Heart right ventricle (tissue), 16 donors: ENCODE measurements at regions of chr6 and their contacts with region 1.

Region 1: DNA sequence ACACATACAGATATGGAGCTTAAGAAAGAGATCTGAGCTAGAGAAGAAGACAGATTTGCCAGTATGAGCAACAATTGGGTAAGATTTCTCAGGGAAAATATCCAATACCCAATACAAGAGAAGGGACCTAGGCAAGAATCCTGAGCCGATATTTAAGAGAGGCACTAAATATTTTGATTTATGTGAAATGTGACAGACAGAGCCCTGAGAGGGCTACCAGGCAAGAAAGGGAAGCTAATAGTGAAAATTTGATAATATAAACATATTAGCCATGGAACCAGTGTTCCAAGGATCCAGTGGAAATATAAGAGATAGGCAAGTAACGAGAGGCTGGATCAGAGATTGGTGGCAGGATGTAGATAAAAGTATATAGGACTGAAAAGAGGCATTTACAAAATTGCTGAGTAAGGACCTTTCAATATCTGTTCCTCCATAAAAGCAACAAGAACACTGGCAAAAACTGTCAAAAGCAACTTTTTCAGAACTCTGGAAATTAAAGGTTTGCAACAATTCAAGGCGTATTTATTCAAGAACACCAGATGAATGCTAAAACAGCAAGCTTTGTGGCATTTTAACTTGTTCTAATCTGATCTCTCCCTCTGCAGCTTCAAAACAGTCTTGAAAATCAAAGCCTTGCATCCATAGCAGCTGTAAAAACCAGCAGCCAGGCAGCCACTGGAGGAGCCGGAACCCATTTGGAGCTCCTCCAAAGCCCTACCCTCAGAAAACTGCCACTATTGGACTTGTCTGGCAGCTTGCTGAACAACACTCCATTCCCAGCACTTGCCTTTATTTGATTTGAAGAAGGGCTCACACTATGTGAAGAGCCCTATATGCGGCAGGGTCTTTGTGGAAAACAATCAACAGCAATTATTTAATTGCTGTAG is 58.8 kb downstream of the REV3L start:
- DNase-seq: peak in 1 of 2 donors; percentile 38
- ATAC-seq: peak in 6 of 8 donors; percentile 57 to 68 (median 64)
- H3K4me3 ChIP-seq: no peak overlapping the region
- H3K27ac ChIP-seq: peak overlapping the region in 2 of 10 donors; percentile 27 to 37
- H3K4me1 ChIP-seq: peaks cover 0 to 54% (median 23%) of the 10 kb centered on the region in 9 donors
- H3K27me3 ChIP-seq: no peaks in the 10 kb centered on the region
- CTCF ChIP-seq: no peak

Region 2: DNA sequence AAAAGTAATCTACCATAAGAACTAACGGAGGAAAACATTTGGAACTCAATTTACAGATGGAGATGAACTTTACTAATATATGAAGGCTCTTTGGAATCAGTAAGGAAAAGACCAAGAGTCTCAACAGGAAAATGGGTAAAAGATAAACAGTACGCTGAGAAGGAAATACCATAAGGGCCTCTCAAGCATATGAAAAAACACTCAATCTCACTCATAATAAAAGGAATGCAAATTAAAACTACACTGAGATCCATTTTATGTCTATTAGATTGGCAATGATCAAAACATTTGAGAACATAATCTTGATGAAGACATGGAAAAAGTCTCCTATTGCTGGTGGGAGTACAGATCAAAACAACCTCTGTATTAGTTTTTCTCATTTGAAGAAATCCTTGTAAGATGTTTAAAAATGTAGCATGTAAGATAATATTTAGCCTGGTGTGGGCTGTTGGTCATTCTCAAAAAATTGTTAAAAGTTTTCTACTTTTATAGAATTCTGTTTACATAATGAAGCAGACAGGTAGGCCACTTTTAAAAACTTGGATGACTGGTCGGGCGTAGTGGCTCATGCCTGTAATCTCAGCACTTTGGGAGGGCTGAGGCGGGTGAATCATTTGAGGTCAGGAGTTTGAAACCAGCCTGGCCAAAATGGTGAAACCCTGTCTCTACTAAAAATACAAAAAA is 44.3 kb after region 1 on chr6:
- intact Hi-C with region 1: loop called in 2 of 10 experiments (anchors 5 to 10 kb)
- DNase-seq: no peak
- ATAC-seq: no peak
- H3K4me3 ChIP-seq: no peak overlapping the region
- H3K27ac ChIP-seq: peak overlapping the region in 2 of 10 donors; percentile 1 to 15
- H3K4me1 ChIP-seq: peaks cover 0 to 25% (median 11%) of the 10 kb centered on the region in 9 donors
- H3K27me3 ChIP-seq: no peaks in the 10 kb centered on the region
- CTCF ChIP-seq: no peak

Region 3: GRCh38 chr6:111551520-111552231 is 127.5 kb after region 1 on chr6:
- intact Hi-C with region 1: no loop called
- DNase-seq: no peak
- ATAC-seq: peak in 6 of 8 donors; percentile 7 to 40 (median 20)
- H3K4me3 ChIP-seq: no peak overlapping the region
- H3K27ac ChIP-seq: peak overlapping the region in 7 of 10 donors; percentile 36 to 73 (median 67)
- H3K4me1 ChIP-seq: peaks cover 7 to 48% (median 38%) of the 10 kb centered on the region in 9 donors
- H3K27me3 ChIP-seq: no peaks in the 10 kb centered on the region
- CTCF ChIP-seq: no peak

Region 4: DNA sequence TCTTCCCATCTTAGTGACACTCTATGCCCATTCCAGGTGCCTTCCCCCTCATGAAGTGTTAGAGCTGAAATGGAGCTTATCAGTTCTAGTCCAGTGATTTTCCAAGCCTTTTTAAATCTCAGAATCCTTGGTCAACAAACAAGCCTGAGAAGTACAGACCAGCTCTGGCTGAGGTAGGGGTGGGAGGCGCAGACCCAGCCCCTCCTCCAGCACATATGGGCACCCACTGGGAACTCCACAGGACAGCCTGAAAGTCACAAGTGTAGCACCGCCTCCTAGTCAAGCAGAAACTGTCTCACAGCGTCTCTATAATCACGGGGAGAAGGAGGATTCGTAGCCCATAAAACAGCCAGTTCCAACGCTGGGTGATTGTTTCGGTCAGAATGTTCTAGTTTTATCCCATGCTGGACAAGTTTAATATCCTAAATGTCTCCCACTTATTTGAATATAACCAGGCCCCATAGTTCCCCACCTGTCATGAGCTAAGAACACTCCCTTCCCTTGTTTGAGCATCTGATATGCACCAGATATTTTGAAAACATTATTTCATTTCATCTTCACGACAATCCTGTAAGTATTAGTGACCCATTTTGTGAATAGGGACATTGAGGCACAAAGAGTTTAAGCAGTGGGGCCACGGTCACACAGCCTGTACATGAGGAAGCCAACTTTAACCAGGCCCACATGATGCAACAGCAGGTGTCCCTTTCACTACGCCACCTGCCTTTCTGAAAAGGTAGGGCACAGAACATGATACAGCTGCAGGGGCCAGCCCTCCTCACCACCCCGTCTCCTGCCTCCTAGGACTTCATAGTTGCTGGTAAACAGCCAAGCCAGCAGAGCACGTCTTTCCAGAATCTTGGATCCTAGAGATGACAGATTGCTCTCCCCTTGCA is 141.4 kb after region 1 on chr6:
- intact Hi-C with region 1: no loop called
- DNase-seq: no peak
- ATAC-seq: no peak
- H3K4me3 ChIP-seq: no peak overlapping the region
- H3K27ac ChIP-seq: peak overlapping the region in 9 of 10 donors; percentile 14 to 86 (median 37)
- H3K4me1 ChIP-seq: peaks cover 19 to 70% (median 57%) of the 10 kb centered on the region in 9 donors
- H3K27me3 ChIP-seq: no peaks in the 10 kb centered on the region
- CTCF ChIP-seq: no peak